WTC11 (cell line): ENCODE measurements at regions of chr2 and their contacts with region 1.

Region 1: GRCh38 chr2:96138179-96139145 is at the start of gene ASTL:
- DNase-seq: peak; percentile 92
- ATAC-seq: peak; percentile 96
- H3K4me3 Mint-ChIP-seq: peak within 1 kb of the TSS; percentile 55
- H3K27ac Mint-ChIP-seq: 0 out of 2 replicates have a peak within 1 kb of the TSS, but pooled peaks have one; percentile 79
- H3K4me1 Mint-ChIP-seq: peaks cover 10% of the 10 kb centered on the region
- H3K27me3 Mint-ChIP-seq: no peaks in the 10 kb centered on the region
- CTCF ChIP-seq: peak; percentile 39
- total RNA-seq, gene ASTL: 0.69 to 1.4 TPM (median 0.79 TPM) in 3 replicates

Region 2: DNA sequence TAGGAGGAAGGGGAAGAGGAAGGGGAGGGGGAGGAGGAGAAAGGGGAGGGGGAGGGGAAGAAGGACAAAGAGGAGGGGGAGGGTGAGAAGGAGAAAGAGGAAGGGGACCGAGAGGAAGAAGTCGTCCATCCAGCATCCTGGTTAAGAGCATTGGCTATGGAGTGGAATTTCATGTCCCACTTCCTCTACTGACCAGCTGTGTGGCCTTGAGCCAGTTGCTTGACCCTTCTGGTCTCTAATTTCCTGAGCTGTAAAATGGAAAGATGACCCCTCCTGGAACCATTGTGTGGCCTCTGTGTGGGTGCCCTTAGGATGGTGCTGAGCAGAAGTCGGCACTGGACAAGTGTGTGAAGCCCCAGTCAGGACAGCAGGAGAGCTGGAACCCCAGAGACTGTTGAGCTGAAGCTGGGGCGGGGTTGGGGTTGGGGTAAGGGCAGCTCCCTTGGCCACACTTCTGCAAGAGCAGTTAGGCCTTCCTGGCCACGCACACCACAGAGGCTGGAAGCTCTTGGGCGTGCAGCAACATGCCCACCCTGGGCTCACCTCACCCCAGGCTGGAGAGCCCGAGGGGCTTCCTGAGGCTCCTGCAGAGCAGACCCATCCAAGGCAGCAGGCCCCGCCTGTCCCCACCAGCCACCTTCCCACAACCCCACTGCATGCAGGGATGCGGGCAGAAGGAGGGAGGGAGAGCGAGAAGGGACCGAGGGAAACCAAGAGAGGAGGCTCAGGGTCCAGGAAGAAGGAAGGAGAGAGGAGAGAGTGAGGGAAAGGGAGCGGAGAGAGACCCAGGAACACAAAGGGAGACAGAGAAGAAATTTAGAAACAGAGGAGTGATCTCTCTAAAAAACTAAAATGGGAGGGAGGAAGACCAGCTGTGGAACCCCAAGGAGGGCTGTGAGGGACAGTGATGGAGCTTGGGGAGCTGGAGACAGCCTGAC is 38.3 kb before region 1 on chr2:
- CTCF ChIA-PET with region 1: interaction called, 13 read pairs
- POLR2A ChIA-PET with region 1: no interaction called
- DNase-seq: peak; percentile 17
- ATAC-seq: peak; percentile 23; the same call in 1 of the 2 replicates
- H3K4me3 Mint-ChIP-seq: no peak overlapping the region
- H3K27ac Mint-ChIP-seq: no peak overlapping the region
- H3K4me1 Mint-ChIP-seq: peaks cover 18% of the 10 kb centered on the region
- H3K27me3 Mint-ChIP-seq: no peaks in the 10 kb centered on the region; the same call in 1 of the 2 replicates
- CTCF ChIP-seq: no peak

Region 3: DNA sequence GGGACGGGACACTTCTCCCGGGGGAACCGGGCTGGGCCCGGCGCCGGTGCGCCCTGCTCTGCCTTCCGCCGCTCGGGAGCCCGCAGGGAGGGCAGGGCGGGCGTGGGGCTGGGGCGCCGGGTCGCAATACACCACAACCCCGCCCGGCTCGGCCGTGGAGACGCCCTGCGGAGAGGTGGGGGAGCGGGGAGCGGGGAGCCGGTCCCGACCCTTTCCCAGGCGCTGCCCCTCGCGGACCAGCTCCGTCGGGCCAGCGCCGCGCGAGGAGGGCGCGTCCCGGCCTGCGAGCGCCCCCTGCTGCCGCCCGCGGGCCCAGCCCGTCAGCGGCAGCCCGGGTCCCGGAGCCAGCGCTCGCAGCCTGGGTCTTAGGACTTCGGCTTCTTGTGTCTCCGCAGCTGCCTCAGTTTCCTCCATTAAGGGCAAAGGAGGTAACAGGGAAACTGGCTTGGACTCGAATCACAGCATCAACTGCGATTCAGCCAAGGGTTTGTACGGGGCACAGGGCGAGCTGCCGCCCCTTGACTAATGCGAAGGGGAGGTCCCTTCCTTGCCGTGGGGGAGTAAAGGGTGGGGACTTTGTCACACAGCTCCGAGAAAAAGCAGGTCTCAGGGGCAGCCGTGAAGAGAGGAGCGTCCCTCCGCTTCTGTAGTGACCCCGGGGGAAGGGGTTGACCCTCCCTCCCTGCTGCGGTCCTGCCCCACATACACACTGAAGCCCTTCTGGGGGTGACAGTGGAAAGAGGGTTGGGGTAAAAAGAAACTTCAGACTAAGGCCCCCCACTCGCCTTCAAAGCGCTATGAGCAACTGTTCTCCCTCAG is 21.4 kb before region 1 on chr2:
- CTCF ChIA-PET with region 1: interaction called, 49 read pairs
- POLR2A ChIA-PET with region 1: interaction called, 3 read pairs
- DNase-seq: peak; percentile 65
- ATAC-seq: peak; percentile 72
- H3K4me3 Mint-ChIP-seq: peak overlapping the region; percentile 59
- H3K27ac Mint-ChIP-seq: no peak overlapping the region
- H3K4me1 Mint-ChIP-seq: peaks cover 28% of the 10 kb centered on the region
- H3K27me3 Mint-ChIP-seq: peaks cover 40% of the 10 kb centered on the region
- CTCF ChIP-seq: peak; percentile 75

Region 4: DNA sequence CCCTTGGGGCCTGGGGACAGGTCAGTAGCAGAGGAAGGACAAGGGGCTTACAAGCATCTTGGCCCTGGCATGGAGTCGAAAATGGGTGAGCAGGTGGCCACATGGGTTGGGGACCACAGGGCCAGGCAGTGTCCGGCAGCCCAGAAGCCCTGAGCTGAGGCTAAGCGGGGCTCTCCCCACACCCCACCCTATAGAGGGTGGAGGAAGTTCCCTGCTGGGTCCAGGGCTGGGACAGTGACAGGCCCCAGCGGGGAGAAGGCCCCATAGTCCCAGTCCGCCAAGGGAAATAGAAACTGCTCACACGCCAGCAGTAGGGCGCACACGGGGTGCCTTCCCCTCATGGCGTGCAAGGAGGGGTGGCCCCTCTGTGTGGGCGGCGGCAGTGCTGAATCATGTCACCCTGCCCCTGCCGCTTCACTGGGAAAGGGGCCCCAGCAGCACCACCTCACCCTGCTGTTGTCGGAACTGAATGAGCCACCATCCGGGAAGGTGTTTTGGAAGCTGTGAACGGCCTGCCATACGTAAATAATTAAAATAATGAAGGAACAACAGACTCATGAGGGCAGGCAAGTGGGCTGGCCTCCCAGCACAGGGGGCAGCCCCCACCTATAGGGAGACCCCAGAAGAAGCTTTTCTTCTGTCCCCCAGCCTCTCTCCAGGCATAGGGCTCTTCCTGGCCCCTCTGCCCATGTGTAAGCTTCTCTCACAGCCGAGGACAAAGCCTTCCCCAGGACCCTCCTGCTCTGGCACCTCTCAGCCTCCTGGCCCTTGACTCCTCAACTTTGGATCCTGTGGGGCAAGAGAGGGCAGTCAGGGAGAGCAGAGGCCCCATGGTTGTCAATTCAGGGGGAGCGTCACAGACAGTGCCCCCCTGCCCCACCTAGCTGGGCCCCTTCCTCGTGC is 19.4 kb after region 1 on chr2:
- CTCF ChIA-PET with region 1: interaction called, 19 read pairs
- POLR2A ChIA-PET with region 1: interaction called, 6 read pairs
- DNase-seq: no peak
- ATAC-seq: peak; percentile 8
- H3K4me3 Mint-ChIP-seq: no peak overlapping the region
- H3K27ac Mint-ChIP-seq: no peak overlapping the region
- H3K4me1 Mint-ChIP-seq: peaks cover 14% of the 10 kb centered on the region
- H3K27me3 Mint-ChIP-seq: no peaks in the 10 kb centered on the region; the same call in 1 of the 2 replicates
- CTCF ChIP-seq: no peak

Region 5: GRCh38 chr2:96208143-96209010 is 69.9 kb after region 1 on chr2 and contains the start of gene STARD7:
- CTCF ChIA-PET with region 1: interaction called, 25 read pairs
- POLR2A ChIA-PET with region 1: interaction called, 7 read pairs
- DNase-seq: peak; percentile 99
- ATAC-seq: peak; percentile 95
- H3K4me3 Mint-ChIP-seq: peak within 1 kb of the TSS; percentile 100
- H3K27ac Mint-ChIP-seq: peak within 1 kb of the TSS; percentile 98
- H3K4me1 Mint-ChIP-seq: peaks cover 48% of the 10 kb centered on the region
- H3K27me3 Mint-ChIP-seq: no peaks in the 10 kb centered on the region
- CTCF ChIP-seq: no peak
- total RNA-seq, gene STARD7: 199 to 217 TPM (median 201 TPM) in 3 replicates

Region 6: GRCh38 chr2:96260404-96261260 is 122.2 kb after region 1 on chr2:
- CTCF ChIA-PET with region 1: interaction called, 17 read pairs
- POLR2A ChIA-PET with region 1: no interaction called
- DNase-seq: peak; percentile 59
- ATAC-seq: peak; percentile 91
- H3K4me3 Mint-ChIP-seq: peak overlapping the region; percentile 25; the same call in 1 of the 2 replicates
- H3K27ac Mint-ChIP-seq: peak overlapping the region; percentile 97
- H3K4me1 Mint-ChIP-seq: peaks cover 30% of the 10 kb centered on the region
- H3K27me3 Mint-ChIP-seq: no peaks in the 10 kb centered on the region
- CTCF ChIP-seq: no peak

Region 7: DNA sequence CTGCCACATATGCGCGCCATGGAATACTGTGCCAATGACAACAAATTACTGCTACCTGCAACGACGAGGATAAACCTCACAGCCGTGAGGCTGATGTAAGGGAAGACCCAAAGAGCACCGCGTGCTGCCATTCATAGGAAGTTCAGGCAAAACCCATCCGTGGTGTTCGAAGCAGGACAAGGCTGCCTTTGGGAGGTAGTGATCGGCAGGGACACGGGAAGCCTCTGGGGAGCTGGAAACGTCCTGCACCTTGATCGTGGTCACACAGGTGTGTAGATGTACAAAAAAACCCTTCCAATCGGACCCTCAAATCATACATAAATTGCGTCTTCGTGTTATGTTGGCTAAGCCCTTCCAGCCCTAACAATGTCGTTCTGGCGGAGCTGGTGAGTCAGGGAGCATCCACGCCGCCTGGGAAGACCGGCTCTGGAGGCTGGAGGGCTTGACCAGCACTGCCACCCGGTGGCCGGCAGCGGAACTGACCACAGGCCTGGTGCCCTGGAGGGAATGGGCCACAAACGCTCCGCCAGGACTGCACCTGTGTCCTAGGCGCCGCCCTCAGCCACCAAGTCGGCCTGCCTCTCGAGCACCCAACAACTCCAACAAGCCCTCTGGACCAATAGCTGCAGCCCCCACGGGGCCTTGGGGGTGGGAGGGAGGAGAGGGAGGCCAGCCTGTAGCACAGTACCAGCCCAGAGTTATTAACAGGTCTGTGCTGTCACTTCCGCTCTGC is 370.8 kb after region 1 on chr2:
- CTCF ChIA-PET with region 1: no interaction called
- POLR2A ChIA-PET with region 1: no interaction called
- DNase-seq: peak; percentile 97
- ATAC-seq: peak; percentile 86
- H3K4me3 Mint-ChIP-seq: peak overlapping the region; percentile 55
- H3K27ac Mint-ChIP-seq: no peak overlapping the region
- H3K4me1 Mint-ChIP-seq: peaks cover 10% of the 10 kb centered on the region
- H3K27me3 Mint-ChIP-seq: peaks cover 33% of the 10 kb centered on the region
- CTCF ChIP-seq: peak; percentile 93; the same call in 1 of the 2 replicates